Activated T-helper 1 cell treated with anti-CD3 and anti-CD28 coated beads, Interleukin-12 subunit alpha, Interleukin-12 subunit beta, Interleukin-2, Interleukin-4 antibody, amounts not matched to agents 30 ng/mL and 10 ng/mL and 1 ng/mL, durations not matched to agents 14 hours and 24 hours and 36 hours (primary cell): ENCODE measurements at regions of chr4 and their contacts with region 1.

Region 1: DNA sequence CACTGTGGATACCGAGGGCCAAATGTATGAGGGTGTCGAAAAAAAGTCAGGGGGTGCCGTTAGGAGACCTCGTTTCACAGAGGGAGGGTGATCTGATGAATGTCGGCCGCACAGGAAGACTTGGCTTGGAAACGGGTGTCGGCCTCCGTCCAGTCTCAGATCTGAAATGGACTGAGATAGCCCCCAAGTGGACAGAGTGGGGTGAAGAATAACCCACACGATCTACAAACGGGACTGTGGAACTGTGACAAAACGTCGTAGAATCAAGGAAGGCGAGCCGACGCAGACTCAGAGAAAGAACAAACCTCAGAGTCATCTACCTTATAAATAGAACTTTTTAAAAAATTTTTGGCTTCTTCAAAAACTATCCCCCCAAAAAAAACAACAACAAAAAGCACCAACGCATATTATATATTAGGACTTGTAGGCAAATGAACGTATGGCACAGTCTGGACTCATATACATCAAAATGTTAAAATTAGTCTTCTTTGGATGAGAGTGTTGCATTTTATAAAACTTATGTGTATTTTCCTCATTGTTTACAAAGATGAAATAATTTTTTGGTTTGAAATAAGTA is 63.8 kb upstream of the IRF2 start:
- DNase-seq: peak; percentile 55
- H3K4me3 Mint-ChIP-seq: peak overlapping the region; percentile 91
- H3K27ac Mint-ChIP-seq: peak overlapping the region; percentile 94
- H3K4me1 Mint-ChIP-seq: peaks cover 64% of the 10 kb centered on the region
- H3K27me3 Mint-ChIP-seq: no peaks in the 10 kb centered on the region

Region 2: DNA sequence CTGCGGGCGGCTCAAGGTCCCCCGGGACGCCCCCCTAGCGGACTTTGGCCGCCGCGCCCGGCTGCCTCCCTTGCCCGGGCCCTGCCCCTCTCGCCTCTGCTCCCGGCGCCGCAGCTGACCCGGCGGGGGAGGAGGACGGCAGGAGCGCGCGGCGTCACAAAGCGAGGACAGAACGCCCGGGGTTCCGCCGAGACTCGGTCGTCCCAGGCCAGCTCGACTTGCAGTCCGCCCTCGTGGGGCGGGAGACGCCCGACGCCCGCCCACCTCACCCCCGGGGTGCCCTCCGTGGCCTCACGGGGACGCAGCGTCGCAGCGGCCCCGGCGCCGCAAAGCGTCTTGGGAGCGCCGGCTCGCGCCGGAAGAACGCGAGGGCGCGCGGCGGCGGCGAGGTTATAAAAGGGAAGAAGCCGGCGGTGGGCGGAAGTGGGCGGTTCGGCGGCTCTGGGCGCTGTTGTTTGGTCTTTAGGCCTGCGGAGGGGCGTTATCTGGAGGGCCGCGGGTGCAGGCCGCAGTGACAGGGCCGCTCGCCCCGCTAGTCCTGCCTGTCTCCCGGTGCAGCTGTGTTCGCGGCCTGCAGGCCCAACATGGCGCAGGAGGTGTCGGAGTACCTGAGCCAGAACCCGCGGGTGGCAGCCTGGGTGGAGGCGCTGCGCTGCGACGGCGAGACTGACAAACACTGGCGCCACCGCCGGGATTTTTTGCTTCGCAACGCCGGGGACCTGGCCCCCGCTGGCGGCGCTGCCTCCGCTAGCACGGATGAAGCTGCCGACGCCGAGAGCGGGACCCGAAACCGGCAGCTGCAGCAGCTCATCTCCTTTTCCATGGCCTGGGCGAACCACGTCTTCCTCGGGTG is 1093.7 kb before region 1 on chr4 and contains the start of gene CDKN2AIP:
- intact Hi-C with region 1: loop called (anchors 2 kb)
- DNase-seq: peak; percentile 93
- H3K4me3 Mint-ChIP-seq: peak within 1 kb of the TSS; percentile 99
- H3K27ac Mint-ChIP-seq: peak within 1 kb of the TSS; percentile 99
- H3K4me1 Mint-ChIP-seq: peaks cover 42% of the 10 kb centered on the region
- H3K27me3 Mint-ChIP-seq: peaks cover 2% of the 10 kb centered on the region
- total RNA-seq, gene CDKN2AIP: 23.9 and 24.1 TPM in 2 replicates

Region 3: DNA sequence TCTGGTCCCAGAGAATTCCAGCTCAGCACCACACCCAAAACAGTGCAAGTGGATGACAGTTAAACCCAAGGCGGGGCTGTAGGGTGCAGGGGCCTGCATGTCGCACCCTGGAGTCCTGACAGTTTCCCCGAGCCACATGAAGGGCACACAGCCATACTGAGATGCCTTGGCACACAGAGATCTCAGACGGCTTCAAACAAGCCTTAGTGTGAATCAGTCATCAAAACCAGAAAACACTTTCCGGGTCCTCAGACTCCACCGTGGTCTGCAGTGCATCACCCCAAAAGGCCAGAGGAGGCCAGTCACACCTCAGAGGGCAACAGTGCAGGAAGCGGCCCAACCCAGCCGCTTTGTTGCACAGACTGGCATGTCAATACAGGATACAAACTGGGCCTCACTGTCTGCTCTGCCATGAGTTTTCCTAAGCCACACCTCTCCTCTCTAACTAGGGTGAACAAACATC is 255.8 kb before region 1 on chr4:
- intact Hi-C with region 1: loop called (anchors 1 kb)
- DNase-seq: peak; percentile 53
- H3K4me3 Mint-ChIP-seq: peak overlapping the region; percentile 50
- H3K27ac Mint-ChIP-seq: peak overlapping the region; percentile 87
- H3K4me1 Mint-ChIP-seq: peaks cover 75% of the 10 kb centered on the region
- H3K27me3 Mint-ChIP-seq: no peaks in the 10 kb centered on the region

Region 4: DNA sequence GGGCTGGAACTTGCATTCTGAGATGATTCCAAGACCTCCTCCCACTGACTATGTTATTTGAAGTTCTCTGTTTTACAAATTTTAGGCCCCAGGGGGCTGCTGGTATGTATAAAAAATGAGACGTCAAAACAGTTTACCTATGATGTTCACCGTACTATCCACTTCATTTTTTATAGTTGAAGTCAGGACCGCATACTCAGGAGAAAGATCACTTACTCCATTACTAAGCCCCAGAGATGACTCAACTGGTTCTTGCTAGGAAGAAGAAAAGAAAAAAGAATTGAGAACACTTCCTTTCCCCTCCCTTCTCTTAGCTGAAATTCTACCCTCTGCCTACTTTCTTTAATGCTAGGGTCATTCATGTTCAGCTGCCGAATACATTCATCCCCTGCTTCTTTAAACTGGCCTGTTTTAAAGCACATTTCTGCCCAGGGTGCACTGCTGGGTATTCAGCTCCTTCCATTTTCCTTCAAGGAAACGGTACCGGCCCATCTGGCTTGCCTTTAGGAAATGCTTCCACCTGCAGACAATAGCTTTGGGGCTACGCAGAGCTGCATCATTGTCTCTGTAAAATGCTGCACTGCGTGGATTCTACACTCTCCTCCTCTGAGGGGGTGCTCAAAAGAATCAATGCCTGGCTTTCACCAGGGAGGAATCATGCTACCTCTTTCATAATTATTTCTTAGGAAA is 129.9 kb before region 1 on chr4:
- intact Hi-C with region 1: loop called (anchors 2 kb)
- DNase-seq: no peak
- H3K4me3 Mint-ChIP-seq: peak overlapping the region; percentile 67
- H3K27ac Mint-ChIP-seq: peak overlapping the region; percentile 88
- H3K4me1 Mint-ChIP-seq: peaks cover 71% of the 10 kb centered on the region
- H3K27me3 Mint-ChIP-seq: no peaks in the 10 kb centered on the region

Region 5: DNA sequence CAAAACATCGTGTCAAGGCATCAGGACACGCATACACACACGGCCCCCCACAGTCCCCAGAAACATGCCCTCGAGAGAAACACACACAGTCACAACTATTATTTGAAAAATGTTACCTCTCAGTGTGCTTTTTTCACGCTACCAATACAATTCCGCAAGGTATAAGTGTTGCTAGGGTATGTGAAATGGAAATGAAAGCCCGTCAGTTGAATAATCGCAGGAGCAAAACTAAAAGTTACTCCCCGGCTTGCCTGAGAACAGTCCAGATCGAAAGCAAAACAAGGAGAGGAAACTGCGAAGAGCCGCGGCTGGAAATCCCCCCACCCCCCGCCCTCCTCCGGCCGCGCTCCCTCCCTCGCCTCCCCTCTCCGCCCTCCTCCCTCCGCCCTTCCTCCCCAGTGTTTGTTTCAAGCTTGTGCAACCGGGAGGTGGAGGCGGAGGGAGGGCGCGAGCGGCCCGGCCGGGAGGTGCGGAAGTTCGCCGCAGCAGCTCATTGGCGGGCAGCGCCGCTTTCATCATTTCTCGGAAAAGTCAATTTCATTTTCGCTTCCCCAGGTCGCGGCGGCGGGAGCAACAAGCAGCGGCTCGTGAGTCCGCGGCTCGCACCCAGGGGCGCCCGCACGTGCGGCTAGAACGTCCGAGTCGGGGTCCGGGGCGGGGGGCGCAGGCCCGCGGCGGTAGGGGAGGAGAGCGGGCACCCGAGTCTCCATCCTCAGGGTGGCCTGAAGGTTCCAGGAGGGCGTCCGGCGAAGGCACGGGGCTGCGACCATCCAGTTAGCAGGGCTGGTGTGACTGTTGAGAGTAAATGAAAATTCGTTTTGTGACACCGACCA is 63.6 kb before region 1 on chr4 and contains the start of gene IRF2:
- intact Hi-C with region 1: loop called (anchors 1 kb)
- DNase-seq: peak; percentile 94
- H3K4me3 Mint-ChIP-seq: peak within 1 kb of the TSS; percentile 97
- H3K27ac Mint-ChIP-seq: peak within 1 kb of the TSS; percentile 96
- H3K4me1 Mint-ChIP-seq: peaks cover 64% of the 10 kb centered on the region
- H3K27me3 Mint-ChIP-seq: no peaks in the 10 kb centered on the region
- total RNA-seq, gene IRF2: 64.2 and 75.8 TPM in 2 replicates

Region 6: GRCh38 chr4:184583738-184584502 is 45.8 kb after region 1 on chr4:
- intact Hi-C with region 1: loop called (anchors 2 kb)
- DNase-seq: peak; percentile 9
- H3K4me3 Mint-ChIP-seq: peak overlapping the region; percentile 20
- H3K27ac Mint-ChIP-seq: peak overlapping the region; percentile 79
- H3K4me1 Mint-ChIP-seq: peaks cover 25% of the 10 kb centered on the region
- H3K27me3 Mint-ChIP-seq: no peaks in the 10 kb centered on the region

Region 7: GRCh38 chr4:184684491-184685189 is 146.5 kb after region 1 on chr4:
- intact Hi-C with region 1: no loop called
- DNase-seq: no peak
- H3K4me3 Mint-ChIP-seq: no peak overlapping the region
- H3K27ac Mint-ChIP-seq: peak overlapping the region; percentile 41
- H3K4me1 Mint-ChIP-seq: peaks cover 28% of the 10 kb centered on the region
- H3K27me3 Mint-ChIP-seq: no peaks in the 10 kb centered on the region